Caco-2 (cell line): ENCODE measurements at regions of chr11 and their contacts with region 1.

Region 1: GRCh38 chr11:95150946-95151684 is 61.5 kb downstream of the ENDOD1 start:
- DNase-seq: peak; percentile 98 to 99
- H3K4me3 ChIP-seq: peak overlapping the region; percentile 51
- H3K4me3 Mint-ChIP-seq: peak overlapping the region; percentile 93
- H3K27ac Mint-ChIP-seq: peak overlapping the region; percentile 94
- H3K4me1 ChIP-seq: peaks cover 14% of the 10 kb centered on the region
- H3K4me1 Mint-ChIP-seq: peaks cover 20% of the 10 kb centered on the region
- H3K27me3 ChIP-seq: no peaks in the 10 kb centered on the region
- H3K27me3 Mint-ChIP-seq: no peaks in the 10 kb centered on the region
- CTCF ChIP-seq: peak; percentile 96 to 97

Region 2: GRCh38 chr11:95089620-95090542 is 61.2 kb before region 1 on chr11 and contains the start of gene ENDOD1:
- CTCF ChIA-PET with region 1: interaction called, 6 read pairs
- POLR2A ChIA-PET with region 1: interaction called, 3 read pairs
- intact Hi-C with region 1: loop called (anchors 1 kb)
- DNase-seq: peak; percentile 89 to 93
- H3K4me3 ChIP-seq: peak within 1 kb of the TSS; percentile 91
- H3K4me3 Mint-ChIP-seq: peak within 1 kb of the TSS; percentile 89
- H3K27ac Mint-ChIP-seq: peak within 1 kb of the TSS; percentile 71
- H3K4me1 ChIP-seq: peaks cover 47% of the 10 kb centered on the region
- H3K4me1 Mint-ChIP-seq: peaks cover 29% of the 10 kb centered on the region
- H3K27me3 ChIP-seq: no peaks in the 10 kb centered on the region
- H3K27me3 Mint-ChIP-seq: peaks cover 5% of the 10 kb centered on the region
- CTCF ChIP-seq: peak; percentile 24 to 40
- total RNA-seq, gene ENDOD1: 22.7 and 23.0 TPM in 2 replicates

Region 3: DNA sequence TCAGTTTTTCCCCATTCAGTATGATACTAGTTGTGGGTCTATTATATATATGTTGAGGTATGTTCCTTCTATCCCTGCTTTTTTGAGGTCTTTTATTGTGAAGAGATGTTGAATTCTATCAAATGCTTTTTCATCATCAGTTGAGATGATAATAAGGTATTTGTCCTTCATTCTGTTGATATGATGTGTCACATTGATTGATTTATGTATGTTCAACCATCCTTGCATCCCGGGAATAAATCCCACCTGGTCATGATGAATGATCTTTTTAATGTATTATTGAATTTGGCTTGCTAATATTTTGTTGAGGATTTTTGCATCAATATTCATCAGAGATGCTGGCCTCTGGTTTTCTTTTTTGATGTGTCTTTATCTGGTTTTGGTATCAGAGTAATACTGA is 35.5 kb before region 1 on chr11:
- CTCF ChIA-PET with region 1: no interaction called
- POLR2A ChIA-PET with region 1: no interaction called
- intact Hi-C with region 1: no loop called
- DNase-seq: no peak
- H3K4me3 ChIP-seq: no peak overlapping the region
- H3K4me3 Mint-ChIP-seq: no peak overlapping the region
- H3K27ac Mint-ChIP-seq: no peak overlapping the region
- H3K4me1 ChIP-seq: 0 out of 2 replicates have a peak, but pooled peaks cover 8% of the 10 kb centered on the region
- H3K4me1 Mint-ChIP-seq: peaks cover 12% of the 10 kb centered on the region
- H3K27me3 ChIP-seq: no peaks in the 10 kb centered on the region
- H3K27me3 Mint-ChIP-seq: no peaks in the 10 kb centered on the region
- CTCF ChIP-seq: no peak

Region 4: DNA sequence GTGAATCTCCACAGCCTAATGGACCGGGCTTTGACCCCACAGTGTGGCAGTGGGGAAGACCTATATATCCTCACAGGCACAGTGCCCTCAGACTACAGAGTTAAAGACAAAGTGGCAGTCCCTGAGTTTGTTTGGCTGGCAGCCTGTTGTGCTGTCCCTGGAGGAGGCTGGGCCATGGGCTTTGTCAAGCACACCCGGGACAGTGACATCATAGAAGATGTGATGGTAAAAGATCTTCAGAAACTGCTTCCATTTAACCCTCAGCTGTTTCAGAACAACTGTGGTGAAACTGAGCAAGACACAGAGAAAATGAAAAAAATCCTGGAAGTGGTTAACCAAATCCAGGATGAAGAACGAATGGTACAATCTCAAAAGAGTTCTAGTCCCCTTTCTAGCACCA is 22.5 kb before region 1 on chr11:
- CTCF ChIA-PET with region 1: no interaction called
- POLR2A ChIA-PET with region 1: no interaction called
- intact Hi-C with region 1: no loop called
- DNase-seq: no peak
- H3K4me3 ChIP-seq: no peak overlapping the region
- H3K4me3 Mint-ChIP-seq: no peak overlapping the region
- H3K27ac Mint-ChIP-seq: no peak overlapping the region
- H3K4me1 ChIP-seq: no peaks in the 10 kb centered on the region
- H3K4me1 Mint-ChIP-seq: no peaks in the 10 kb centered on the region
- H3K27me3 ChIP-seq: no peaks in the 10 kb centered on the region
- H3K27me3 Mint-ChIP-seq: no peaks in the 10 kb centered on the region
- CTCF ChIP-seq: no peak

Region 5: DNA sequence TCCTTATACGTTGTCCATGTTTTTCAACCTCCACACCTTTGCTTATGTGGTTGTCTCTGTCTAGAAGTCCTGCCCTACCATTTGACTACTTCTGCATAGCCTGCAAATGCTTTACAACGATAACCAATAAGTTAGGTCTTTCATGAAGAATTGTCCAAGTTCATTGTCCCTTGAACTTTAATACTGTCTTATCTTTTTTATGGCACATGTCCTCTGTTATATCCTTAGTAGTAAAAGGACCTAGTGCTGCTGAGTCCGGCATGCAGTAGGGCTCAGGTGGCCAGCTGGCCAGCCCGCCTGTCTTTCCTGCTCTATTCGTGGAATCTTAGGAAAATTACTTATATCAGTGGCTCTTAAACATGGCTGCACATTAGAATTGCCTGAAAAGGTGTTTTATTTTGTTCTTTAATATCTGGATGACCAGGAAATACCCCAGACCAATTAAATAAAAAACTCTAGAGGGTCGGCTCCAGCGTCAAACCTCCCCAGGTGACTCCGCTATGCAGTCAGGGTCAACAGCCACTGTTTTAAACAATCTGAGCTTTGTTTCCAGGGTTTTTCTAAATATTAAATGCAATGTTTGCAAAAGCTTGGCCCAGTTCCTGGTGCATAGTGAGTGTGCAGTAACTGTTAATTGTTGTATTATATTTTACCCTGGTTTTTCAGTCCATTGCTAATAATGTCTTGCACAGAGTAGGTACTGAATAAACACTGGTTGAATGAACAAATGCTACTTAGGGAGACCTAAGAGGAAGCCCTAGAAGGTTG is 144.5 kb after region 1 on chr11:
- CTCF ChIA-PET with region 1: no interaction called
- POLR2A ChIA-PET with region 1: no interaction called
- intact Hi-C with region 1: no loop called
- DNase-seq: no peak
- H3K4me3 ChIP-seq: no peak overlapping the region
- H3K4me3 Mint-ChIP-seq: no peak overlapping the region
- H3K27ac Mint-ChIP-seq: no peak overlapping the region
- H3K4me1 ChIP-seq: peaks cover 37% of the 10 kb centered on the region
- H3K4me1 Mint-ChIP-seq: peaks cover 27% of the 10 kb centered on the region
- H3K27me3 ChIP-seq: no peaks in the 10 kb centered on the region
- H3K27me3 Mint-ChIP-seq: no peaks in the 10 kb centered on the region
- CTCF ChIP-seq: no peak

Region 6: DNA sequence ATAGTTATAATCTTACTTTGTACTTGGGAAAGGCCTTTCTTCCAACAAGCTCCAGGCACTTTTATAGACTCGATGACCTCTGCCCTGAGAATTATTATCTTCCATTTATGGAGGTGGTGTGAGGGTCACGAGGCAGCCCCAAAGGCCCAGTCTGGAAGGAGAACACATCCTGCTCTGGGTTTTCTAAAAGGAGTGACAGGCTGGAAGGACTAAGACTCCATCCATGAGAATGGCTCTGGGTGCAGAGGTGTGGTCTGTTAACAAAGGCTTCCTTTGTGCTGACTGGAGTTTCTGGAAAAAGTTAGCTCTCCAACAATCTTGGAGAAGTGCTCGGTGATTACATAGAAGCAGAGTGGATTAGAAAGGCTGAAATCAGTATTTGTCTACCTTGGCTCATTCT is 154.6 kb after region 1 on chr11:
- CTCF ChIA-PET with region 1: interaction called, 10 read pairs
- POLR2A ChIA-PET with region 1: no interaction called
- intact Hi-C with region 1: loop called (anchors 1 kb)
- DNase-seq: no peak
- H3K4me3 ChIP-seq: no peak overlapping the region
- H3K4me3 Mint-ChIP-seq: no peak overlapping the region
- H3K27ac Mint-ChIP-seq: no peak overlapping the region
- H3K4me1 ChIP-seq: no peaks in the 10 kb centered on the region
- H3K4me1 Mint-ChIP-seq: no peaks in the 10 kb centered on the region
- H3K27me3 ChIP-seq: no peaks in the 10 kb centered on the region
- H3K27me3 Mint-ChIP-seq: no peaks in the 10 kb centered on the region
- CTCF ChIP-seq: no peak

Region 7: GRCh38 chr11:95487391-95487790 is 336.3 kb after region 1 on chr11:
- CTCF ChIA-PET with region 1: interaction called, 3 read pairs
- POLR2A ChIA-PET with region 1: no interaction called
- intact Hi-C with region 1: loop called (anchors 5 kb)
- DNase-seq: peak; percentile 77 to 81
- H3K4me3 ChIP-seq: no peak overlapping the region
- H3K4me3 Mint-ChIP-seq: peak overlapping the region; percentile 73
- H3K27ac Mint-ChIP-seq: peak overlapping the region; percentile 96
- H3K4me1 ChIP-seq: peaks cover 29% of the 10 kb centered on the region
- H3K4me1 Mint-ChIP-seq: peaks cover 30% of the 10 kb centered on the region
- H3K27me3 ChIP-seq: no peaks in the 10 kb centered on the region
- H3K27me3 Mint-ChIP-seq: no peaks in the 10 kb centered on the region
- CTCF ChIP-seq: no peak

Region 8: GRCh38 chr11:95705485-95706124 is 554.5 kb after region 1 on chr11:
- CTCF ChIA-PET with region 1: interaction called, 67 read pairs
- POLR2A ChIA-PET with region 1: no interaction called
- intact Hi-C with region 1: loop called (anchors 1 kb)
- DNase-seq: peak; percentile 85 to 89
- H3K4me3 ChIP-seq: no peak overlapping the region
- H3K4me3 Mint-ChIP-seq: no peak overlapping the region
- H3K27ac Mint-ChIP-seq: no peak overlapping the region
- H3K4me1 ChIP-seq: peaks cover 38% of the 10 kb centered on the region
- H3K4me1 Mint-ChIP-seq: peaks cover 24% of the 10 kb centered on the region
- H3K27me3 ChIP-seq: no peaks in the 10 kb centered on the region
- H3K27me3 Mint-ChIP-seq: no peaks in the 10 kb centered on the region
- CTCF ChIP-seq: peak; percentile 93 to 94

Region 9: GRCh38 chr11:95835768-95836488 is 684.8 kb after region 1 on chr11:
- CTCF ChIA-PET with region 1: interaction called, 5 read pairs
- POLR2A ChIA-PET with region 1: no interaction called
- intact Hi-C with region 1: loop called (anchors 5 kb)
- DNase-seq: peak; percentile 84 to 85
- H3K4me3 ChIP-seq: no peak overlapping the region
- H3K4me3 Mint-ChIP-seq: no peak overlapping the region
- H3K27ac Mint-ChIP-seq: no peak overlapping the region
- H3K4me1 ChIP-seq: no peaks in the 10 kb centered on the region; the same call in 1 of the 2 replicates
- H3K4me1 Mint-ChIP-seq: peaks cover 6% of the 10 kb centered on the region
- H3K27me3 ChIP-seq: no peaks in the 10 kb centered on the region
- H3K27me3 Mint-ChIP-seq: no peaks in the 10 kb centered on the region
- CTCF ChIP-seq: peak; percentile 97 to 98